Activated CD4-positive, alpha-beta memory T cell treated with anti-CD3 and anti-CD28 coated beads, Interleukin-2, amount 10 ng/mL, durations not matched to agents 7 days and 5 days (primary cell): ENCODE measurements at regions of chr5 and their contacts with region 1.

Region 1: GRCh38 chr5:141338538-141339306 is at the start of gene PCDHGA2:
- DNase-seq: no peak
- H3K4me3 Mint-ChIP-seq: no peak within 1 kb of the TSS
- H3K27ac Mint-ChIP-seq: no peak within 1 kb of the TSS
- H3K4me1 Mint-ChIP-seq: no peaks in the 10 kb centered on the region
- H3K27me3 Mint-ChIP-seq: peaks cover 26% of the 10 kb centered on the region
- total RNA-seq, gene PCDHGA2: 0.05 TPM in 1 of 2 experiments, not detected in the other

Region 2: DNA sequence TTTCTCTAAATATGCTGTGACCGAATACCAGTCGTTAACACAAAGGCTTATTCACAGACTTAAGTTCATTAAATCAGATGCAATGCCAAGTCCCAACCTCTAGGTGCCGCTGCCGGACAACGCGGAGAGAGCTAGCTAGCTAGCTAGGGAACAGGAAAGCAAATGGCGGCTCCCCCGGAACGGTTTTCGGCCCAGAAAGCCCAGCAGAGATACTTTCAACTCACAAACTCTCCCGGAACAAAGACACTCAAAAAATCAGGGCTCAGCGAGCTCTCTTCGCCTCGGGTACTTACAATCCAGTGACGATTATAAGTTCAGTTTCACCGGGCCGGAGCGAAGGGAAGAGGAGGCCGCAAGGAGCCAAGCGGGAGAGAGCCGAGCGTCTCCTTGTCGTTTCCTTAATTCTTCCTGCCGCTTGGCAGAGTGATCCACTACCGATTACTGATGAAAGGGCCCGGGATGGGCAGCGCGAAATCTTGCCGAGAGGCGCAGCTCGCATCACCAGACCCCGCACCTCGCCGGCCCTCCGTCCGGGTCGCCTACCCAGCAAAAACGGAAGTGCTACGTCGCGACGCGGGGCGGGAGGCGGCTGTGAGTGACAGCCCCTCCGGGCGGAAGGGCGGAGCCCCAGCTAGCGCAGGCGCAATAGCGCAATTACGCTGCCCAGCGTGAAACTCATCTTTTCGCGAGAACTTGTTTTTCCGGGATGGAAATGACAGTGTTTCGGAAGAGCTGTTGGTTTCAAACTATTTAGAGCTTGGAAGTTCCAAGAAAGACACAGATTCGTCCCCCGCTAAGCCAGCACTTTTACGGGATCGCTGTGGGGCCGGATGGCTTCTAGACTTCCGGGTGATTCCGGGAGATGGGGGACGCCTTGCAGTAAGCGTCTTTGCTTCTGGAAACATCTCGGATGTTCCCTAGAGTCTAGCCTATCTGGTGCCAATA is 18.2 kb before region 1 on chr5 and contains the start of gene TAF7:
- CTCF ChIA-PET with region 1: interaction called, 14 read pairs
- POLR2A ChIA-PET with region 1: interaction called, 16 read pairs
- DNase-seq: peak; percentile 93
- H3K4me3 Mint-ChIP-seq: peak within 1 kb of the TSS; percentile 97
- H3K27ac Mint-ChIP-seq: peak within 1 kb of the TSS; percentile 99
- H3K4me1 Mint-ChIP-seq: peaks cover 40% of the 10 kb centered on the region
- H3K27me3 Mint-ChIP-seq: peaks cover 1% of the 10 kb centered on the region
- total RNA-seq, gene TAF7: 74.3 to 75.1 TPM

Region 3: DNA sequence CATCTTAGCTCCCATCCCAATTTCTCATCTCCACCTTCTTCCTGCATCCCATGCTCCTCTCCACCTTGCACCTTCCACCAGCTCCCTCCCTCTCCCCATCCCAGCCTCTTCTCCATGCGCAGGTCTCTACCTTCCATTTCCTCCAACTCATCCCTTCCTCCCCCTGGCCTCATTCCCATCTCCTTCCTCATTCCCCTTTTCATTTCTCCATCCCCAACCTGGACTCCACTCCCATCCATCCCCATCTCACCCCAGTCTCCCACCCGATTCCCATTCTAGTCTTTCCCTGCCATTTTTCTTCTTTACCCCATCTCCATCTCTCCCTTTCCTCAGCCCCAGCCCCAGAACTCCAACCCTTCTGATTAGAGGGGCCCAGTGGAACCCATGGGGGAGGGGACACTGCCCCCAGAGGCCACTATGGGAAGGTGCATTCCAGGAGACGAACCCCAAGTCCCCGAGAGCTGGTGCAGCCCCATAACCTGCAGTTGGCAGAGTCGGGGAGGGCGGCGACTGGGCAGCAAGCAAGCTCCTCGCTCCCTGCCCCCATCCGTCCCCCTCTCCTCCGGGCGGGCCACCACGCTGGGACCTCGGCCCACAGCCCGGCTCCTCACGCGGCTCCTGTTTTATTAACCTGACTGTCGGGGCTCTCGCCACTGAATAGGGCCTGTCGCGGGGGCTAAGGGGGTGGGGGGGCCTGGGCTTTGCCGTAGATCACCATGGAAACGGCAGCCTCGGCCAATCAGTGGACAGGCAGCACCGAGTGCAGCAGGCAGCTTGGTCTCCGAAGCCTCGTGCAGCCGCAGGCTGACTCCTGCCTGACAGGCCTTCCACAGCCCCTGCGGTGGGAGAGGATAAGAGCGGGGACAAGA is 472.8 kb after region 1 on chr5:
- CTCF ChIA-PET with region 1: no interaction called
- POLR2A ChIA-PET with region 1: no interaction called
- DNase-seq: peak; percentile 39
- H3K4me3 Mint-ChIP-seq: no peak overlapping the region
- H3K27ac Mint-ChIP-seq: no peak overlapping the region
- H3K4me1 Mint-ChIP-seq: peaks cover 6% of the 10 kb centered on the region
- H3K27me3 Mint-ChIP-seq: peaks cover 57% of the 10 kb centered on the region